GM12878 (cell line): ENCODE measurements at regions of chr21 and their contacts with region 1.

Region 1: DNA sequence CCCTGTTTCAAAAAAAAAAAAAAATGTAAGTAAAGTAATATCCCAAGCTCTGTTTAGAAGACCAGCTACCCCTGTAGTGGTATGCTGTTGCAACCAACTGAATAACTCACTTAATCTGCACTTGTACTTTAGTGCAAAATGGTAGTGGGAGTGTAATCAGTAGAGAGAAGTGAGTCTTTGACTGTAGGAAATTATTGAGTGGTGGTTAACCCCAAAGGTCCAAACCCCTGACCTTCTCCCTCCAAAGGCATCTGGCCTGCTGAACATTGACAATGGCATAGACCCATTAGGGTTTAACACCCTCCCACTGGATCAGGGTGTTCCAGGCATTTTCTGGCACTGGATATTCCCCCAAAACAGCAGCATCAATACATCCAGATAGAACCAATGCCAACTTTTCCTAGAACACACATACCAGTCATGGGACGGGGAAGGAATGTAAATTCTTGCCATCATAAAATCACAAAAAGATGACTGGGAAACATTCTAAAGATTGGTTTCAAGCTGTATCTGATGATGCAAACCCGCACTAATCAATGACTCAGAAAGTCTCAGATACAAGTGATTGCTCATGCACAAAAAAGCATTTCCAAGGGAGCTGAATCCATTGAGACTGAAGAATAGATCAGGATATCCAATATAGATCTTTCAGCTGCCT is 110.3 kb downstream of the MRPL39 start:
- DNase-seq: no peak
- ATAC-seq: peak; percentile 45
- H3K4me3 ChIP-seq: 0 out of 2 replicates have a peak overlapping the region, but pooled peaks have one; percentile 4
- H3K27ac ChIP-seq: peak overlapping the region; percentile 75
- H3K4me1 ChIP-seq: peaks cover 43% of the 10 kb centered on the region
- H3K27me3 ChIP-seq: no peaks in the 10 kb centered on the region
- CTCF ChIP-seq: no peak
- EP300 ChIP-seq: no peak
- POLR2A ChIP-seq: no peak
- RAD21 ChIP-seq: no peak

Region 2: GRCh38 chr21:25220954-25221353 is 276.0 kb before region 1 on chr21:
- CTCF ChIA-PET with region 1: no interaction called
- POLR2A ChIA-PET with region 1: no interaction called
- RAD21 ChIA-PET with region 1: no interaction called
- SMC1A ChIA-PET with region 1: no interaction called
- in situ Hi-C with region 1: no loop called
- intact Hi-C with region 1: no loop called
- DNase-seq: no peak
- ATAC-seq: no peak
- H3K4me3 ChIP-seq: no peak overlapping the region
- H3K27ac ChIP-seq: no peak overlapping the region
- H3K4me1 ChIP-seq: peaks cover 3% of the 10 kb centered on the region; the same call in 1 of the 2 replicates
- H3K27me3 ChIP-seq: no peaks in the 10 kb centered on the region
- CTCF ChIP-seq: no peak
- EP300 ChIP-seq: no peak
- POLR2A ChIP-seq: no peak
- RAD21 ChIP-seq: no peak

Region 3: GRCh38 chr21:25457411-25457810 is 39.5 kb before region 1 on chr21:
- CTCF ChIA-PET with region 1: interaction called, 5 read pairs
- POLR2A ChIA-PET with region 1: interaction called, 10 read pairs
- RAD21 ChIA-PET with region 1: no interaction called
- SMC1A ChIA-PET with region 1: interaction called, 6 read pairs
- in situ Hi-C with region 1: no loop called
- intact Hi-C with region 1: loop called (anchors 1 kb)
- DNase-seq: peak; percentile 83
- ATAC-seq: peak; percentile 60
- H3K4me3 ChIP-seq: no peak overlapping the region
- H3K27ac ChIP-seq: peak overlapping the region; percentile 98
- H3K4me1 ChIP-seq: peaks cover 52% of the 10 kb centered on the region
- H3K27me3 ChIP-seq: no peaks in the 10 kb centered on the region
- CTCF ChIP-seq: no peak
- EP300 ChIP-seq: peak; percentile 100
- POLR2A ChIP-seq: no peak
- RAD21 ChIP-seq: peak; percentile 25; the same call in 1 of the 2 replicates

Region 4: DNA sequence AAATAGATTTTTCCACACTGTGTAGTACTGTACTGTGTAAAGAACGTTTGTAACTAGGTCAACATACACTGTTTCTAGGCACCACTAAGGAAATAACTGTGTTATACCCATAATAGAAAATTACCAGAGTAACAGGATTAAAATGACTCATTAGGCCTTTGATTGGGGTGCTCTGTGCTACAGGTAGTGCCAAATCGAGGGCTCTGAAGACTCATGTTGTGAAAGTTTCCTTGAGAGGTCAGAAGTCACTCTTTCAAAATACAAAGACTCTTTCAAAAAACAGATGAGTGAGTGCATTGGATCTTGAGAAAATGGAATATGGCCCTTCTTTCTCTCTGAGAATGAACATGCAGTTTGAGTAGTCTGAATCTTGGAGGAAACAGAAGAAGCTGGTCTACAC is 32.7 kb before region 1 on chr21:
- CTCF ChIA-PET with region 1: interaction called, 5 read pairs
- POLR2A ChIA-PET with region 1: interaction called, 4 read pairs
- RAD21 ChIA-PET with region 1: interaction called, 4 read pairs
- SMC1A ChIA-PET with region 1: interaction called, 14 read pairs
- in situ Hi-C with region 1: no loop called
- intact Hi-C with region 1: loop called (anchors 2 kb)
- DNase-seq: no peak
- ATAC-seq: peak; percentile 76
- H3K4me3 ChIP-seq: peak overlapping the region; percentile 22; the same call in 1 of the 2 replicates
- H3K27ac ChIP-seq: peak overlapping the region; percentile 87
- H3K4me1 ChIP-seq: peaks cover 41% of the 10 kb centered on the region
- H3K27me3 ChIP-seq: no peaks in the 10 kb centered on the region
- CTCF ChIP-seq: no peak
- EP300 ChIP-seq: peak; percentile 69 to 94; a peak in 3 of 4 replicates
- POLR2A ChIP-seq: no peak
- RAD21 ChIP-seq: no peak

Region 5: DNA sequence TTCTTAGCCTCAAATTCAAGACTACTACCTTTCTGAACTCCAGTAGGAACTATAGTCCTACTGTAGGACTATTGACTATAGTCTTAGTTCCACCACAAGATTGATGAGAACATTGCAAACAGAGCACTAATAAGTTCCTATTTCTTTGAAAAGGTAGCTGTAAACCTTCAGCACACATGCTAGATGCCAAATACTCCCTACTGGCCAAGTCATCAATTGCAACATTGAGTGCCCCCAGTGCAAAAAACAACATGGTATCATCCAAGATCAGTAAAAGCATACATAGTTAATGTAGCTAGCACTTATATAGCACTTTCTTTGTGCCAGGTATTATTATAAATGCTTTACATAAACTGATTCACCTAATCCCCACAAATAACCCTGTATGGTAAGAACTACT is 10.6 kb after region 1 on chr21:
- CTCF ChIA-PET with region 1: interaction called, 5 read pairs
- POLR2A ChIA-PET with region 1: interaction called, 7 read pairs
- RAD21 ChIA-PET with region 1: interaction called, 11 read pairs
- SMC1A ChIA-PET with region 1: interaction called, 28 read pairs
- in situ Hi-C with region 1: no loop called
- intact Hi-C with region 1: no loop called
- DNase-seq: no peak
- ATAC-seq: peak; percentile 57
- H3K4me3 ChIP-seq: no peak overlapping the region
- H3K27ac ChIP-seq: peak overlapping the region; percentile 95
- H3K4me1 ChIP-seq: peaks cover 41% of the 10 kb centered on the region
- H3K27me3 ChIP-seq: no peaks in the 10 kb centered on the region
- CTCF ChIP-seq: peak; percentile 19 to 52 (median 31); a peak in 4 of 6 replicates
- EP300 ChIP-seq: no peak
- POLR2A ChIP-seq: no peak
- RAD21 ChIP-seq: peak; percentile 60

Region 6: GRCh38 chr21:25515484-25516405 is 18.8 kb after region 1 on chr21:
- CTCF ChIA-PET with region 1: no interaction called
- POLR2A ChIA-PET with region 1: interaction called, 7 read pairs
- RAD21 ChIA-PET with region 1: interaction called, 5 read pairs
- SMC1A ChIA-PET with region 1: interaction called, 10 read pairs
- in situ Hi-C with region 1: no loop called
- intact Hi-C with region 1: no loop called
- DNase-seq: no peak
- ATAC-seq: no peak
- H3K4me3 ChIP-seq: no peak overlapping the region
- H3K27ac ChIP-seq: no peak overlapping the region
- H3K4me1 ChIP-seq: peaks cover 8% of the 10 kb centered on the region; the same call in 1 of the 2 replicates
- H3K27me3 ChIP-seq: no peaks in the 10 kb centered on the region
- CTCF ChIP-seq: no peak
- EP300 ChIP-seq: no peak
- POLR2A ChIP-seq: no peak
- RAD21 ChIP-seq: no peak